PC-9 (cell line): ENCODE measurements at regions of chrX and their contacts with region 1.

Region 1: GRCh38 chrX:87299563-87300160 is 217.9 kb upstream of the KLHL4 start:
- DNase-seq: no peak
- H3K4me3 ChIP-seq: no peak overlapping the region
- H3K27ac ChIP-seq: no peak overlapping the region
- H3K4me1 ChIP-seq: no peaks in the 10 kb centered on the region
- H3K27me3 ChIP-seq: no peaks in the 10 kb centered on the region
- CTCF ChIP-seq: peak; percentile 64

Region 2: DNA sequence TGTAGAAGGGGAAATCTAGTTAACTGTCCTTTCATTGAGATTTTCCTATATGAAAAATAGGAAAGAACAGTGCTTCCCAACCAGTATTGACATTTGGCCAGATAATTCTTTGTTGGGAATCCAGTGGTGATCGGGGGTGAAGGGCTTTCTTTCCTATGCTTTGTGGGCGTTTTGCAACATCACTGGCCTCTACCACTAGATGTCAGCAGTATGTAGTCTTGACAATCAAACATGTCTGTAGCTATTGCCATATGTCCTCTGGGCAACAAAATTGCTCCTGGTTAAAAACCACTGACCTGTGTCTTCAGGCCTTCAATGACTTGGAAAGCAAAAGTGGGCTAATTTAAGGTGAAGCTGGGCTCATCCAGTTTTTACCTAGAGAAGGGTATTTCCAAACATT is 492.9 kb before region 1 on chrX:
- CTCF ChIA-PET with region 1: interaction called, 5 read pairs
- POLR2A ChIA-PET with region 1: no interaction called
- intact Hi-C with region 1: loop called (anchors 10 kb)
- DNase-seq: no peak
- H3K4me3 ChIP-seq: no peak overlapping the region
- H3K27ac ChIP-seq: no peak overlapping the region
- H3K4me1 ChIP-seq: no peaks in the 10 kb centered on the region
- H3K27me3 ChIP-seq: no peaks in the 10 kb centered on the region
- CTCF ChIP-seq: peak; percentile 46; the same call in 1 of the 2 replicates

Region 3: DNA sequence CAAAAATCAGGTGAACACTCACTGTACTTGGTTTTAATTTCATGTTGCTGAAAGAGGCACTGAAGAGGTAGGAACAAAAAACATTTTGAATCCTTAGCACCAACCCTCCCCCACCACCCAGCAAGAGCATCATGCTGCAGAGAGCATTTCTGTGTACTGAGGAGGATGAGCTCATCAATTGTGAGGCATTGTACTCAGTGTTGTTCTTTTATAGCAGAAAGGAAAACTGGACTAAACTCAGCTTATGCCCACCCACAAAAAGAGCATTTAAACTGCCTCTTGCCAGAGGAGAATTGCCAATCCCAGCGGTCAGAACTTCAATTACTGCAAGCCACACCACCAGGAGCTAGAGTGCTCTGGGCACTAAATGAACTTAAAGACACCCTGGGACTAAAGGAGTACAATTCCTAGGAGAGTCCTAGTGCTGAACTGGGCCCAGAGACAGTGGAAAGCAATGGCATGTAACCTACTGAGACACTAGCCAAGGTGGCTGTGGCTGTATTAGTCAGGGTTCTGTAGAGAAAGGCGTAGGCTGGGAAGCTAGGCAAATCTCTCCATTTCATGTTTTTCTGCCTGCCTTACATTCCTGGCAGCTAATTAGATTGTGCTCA is 62.7 kb before region 1 on chrX:
- CTCF ChIA-PET with region 1: no interaction called
- POLR2A ChIA-PET with region 1: no interaction called
- intact Hi-C with region 1: no loop called
- DNase-seq: no peak
- H3K4me3 ChIP-seq: no peak overlapping the region
- H3K27ac ChIP-seq: no peak overlapping the region
- H3K4me1 ChIP-seq: no peaks in the 10 kb centered on the region
- H3K27me3 ChIP-seq: no peaks in the 10 kb centered on the region
- CTCF ChIP-seq: no peak

Region 4: DNA sequence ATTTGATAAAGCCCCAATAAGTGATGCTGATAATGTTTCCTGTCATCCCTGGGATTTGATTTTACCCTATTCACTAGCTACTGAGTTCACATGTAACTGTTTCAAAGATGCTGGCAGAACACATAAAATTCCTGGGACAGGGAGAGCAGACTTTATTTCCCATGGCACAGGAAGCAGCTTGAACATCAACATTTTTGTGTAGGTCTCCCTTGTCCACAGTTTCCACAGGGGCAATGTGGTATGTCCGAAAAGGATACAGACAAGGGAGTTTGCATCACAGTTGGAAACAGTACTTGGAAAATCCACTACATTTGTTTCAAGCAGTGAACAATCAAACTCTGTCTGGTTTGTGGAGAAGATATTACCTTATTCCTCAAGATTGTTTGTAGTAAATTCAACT is 88.7 kb after region 1 on chrX:
- CTCF ChIA-PET with region 1: no interaction called
- POLR2A ChIA-PET with region 1: no interaction called
- intact Hi-C with region 1: no loop called
- DNase-seq: no peak
- H3K4me3 ChIP-seq: no peak overlapping the region
- H3K27ac ChIP-seq: no peak overlapping the region
- H3K4me1 ChIP-seq: no peaks in the 10 kb centered on the region
- H3K27me3 ChIP-seq: no peaks in the 10 kb centered on the region
- CTCF ChIP-seq: no peak